Heart right ventricle (tissue), 16 donors: ENCODE measurements at regions of chr9 and their contacts with region 1.

Region 1: GRCh38 chr9:121059998-121060636 is 10.0 kb upstream of the C5 start:
- DNase-seq: peak in 1 of 2 donors; percentile 41
- ATAC-seq: no peak
- H3K4me3 ChIP-seq: no peak overlapping the region
- H3K27ac ChIP-seq: no peak overlapping the region
- H3K4me1 ChIP-seq: peaks cover 0 to 7% (median 0%) of the 10 kb centered on the region in 9 donors
- H3K27me3 ChIP-seq: no peaks in the 10 kb centered on the region
- CTCF ChIP-seq: peak; percentile 49 to 82 (median 77)

Region 2: DNA sequence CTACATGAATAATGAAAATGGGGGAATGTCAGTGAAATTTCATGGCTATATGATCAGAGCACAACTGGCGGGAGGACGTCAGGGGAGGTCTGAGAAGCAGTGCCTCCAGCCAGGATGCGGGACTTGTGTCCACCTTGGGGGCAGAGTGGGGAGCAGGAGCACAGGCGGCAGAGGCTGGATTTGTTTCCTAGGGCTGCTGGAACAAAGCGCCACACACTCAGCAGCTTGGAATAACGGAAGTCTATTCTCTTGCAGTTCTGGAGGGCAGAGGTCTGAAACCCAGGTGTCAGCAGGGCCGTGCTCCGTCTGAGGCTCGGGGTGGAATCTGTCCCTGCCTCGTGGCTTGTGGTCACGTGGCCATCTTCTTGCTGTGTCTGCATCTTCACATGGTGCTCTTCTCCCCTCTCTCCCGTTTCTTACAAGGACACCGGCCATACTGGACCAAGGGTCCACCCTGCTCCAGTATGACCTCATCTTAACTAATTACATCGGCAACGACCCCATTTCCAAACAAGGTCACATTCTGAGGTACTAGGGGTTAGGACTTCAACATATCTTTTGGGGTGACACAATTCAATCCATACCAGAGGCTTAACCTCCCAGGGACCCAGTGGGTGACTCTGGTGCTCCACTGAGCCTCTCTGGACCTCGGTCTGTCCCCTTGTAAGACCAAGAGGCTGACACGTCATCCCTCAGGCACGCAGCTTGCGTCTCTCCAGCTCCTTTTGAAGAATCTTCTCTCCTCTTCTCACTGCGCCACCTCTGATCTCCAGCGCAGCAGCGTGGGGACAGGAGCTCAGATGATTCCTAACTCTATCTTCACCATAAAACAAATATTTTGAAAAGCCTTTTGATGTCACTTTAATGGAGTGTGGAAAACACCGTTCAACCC is 682.6 kb before region 1 on chr9:
- intact Hi-C with region 1: no loop called
- DNase-seq: no peak
- ATAC-seq: no peak
- H3K4me3 ChIP-seq: no peak overlapping the region
- H3K27ac ChIP-seq: no peak overlapping the region
- H3K4me1 ChIP-seq: no peaks in the 10 kb centered on the region
- H3K27me3 ChIP-seq: no peaks in the 10 kb centered on the region
- CTCF ChIP-seq: no peak

Region 3: GRCh38 chr9:120750421-120750820 is 309.7 kb before region 1 on chr9:
- intact Hi-C with region 1: loop called in 8 of 10 experiments (anchors 5 to 10 kb)
- DNase-seq: no peak
- ATAC-seq: no peak
- H3K4me3 ChIP-seq: no peak overlapping the region
- H3K27ac ChIP-seq: no peak overlapping the region
- H3K4me1 ChIP-seq: peaks cover 0 to under 1% (median 0%) of the 10 kb centered on the region in 9 donors
- H3K27me3 ChIP-seq: no peaks in the 10 kb centered on the region
- CTCF ChIP-seq: no peak

Region 4: DNA sequence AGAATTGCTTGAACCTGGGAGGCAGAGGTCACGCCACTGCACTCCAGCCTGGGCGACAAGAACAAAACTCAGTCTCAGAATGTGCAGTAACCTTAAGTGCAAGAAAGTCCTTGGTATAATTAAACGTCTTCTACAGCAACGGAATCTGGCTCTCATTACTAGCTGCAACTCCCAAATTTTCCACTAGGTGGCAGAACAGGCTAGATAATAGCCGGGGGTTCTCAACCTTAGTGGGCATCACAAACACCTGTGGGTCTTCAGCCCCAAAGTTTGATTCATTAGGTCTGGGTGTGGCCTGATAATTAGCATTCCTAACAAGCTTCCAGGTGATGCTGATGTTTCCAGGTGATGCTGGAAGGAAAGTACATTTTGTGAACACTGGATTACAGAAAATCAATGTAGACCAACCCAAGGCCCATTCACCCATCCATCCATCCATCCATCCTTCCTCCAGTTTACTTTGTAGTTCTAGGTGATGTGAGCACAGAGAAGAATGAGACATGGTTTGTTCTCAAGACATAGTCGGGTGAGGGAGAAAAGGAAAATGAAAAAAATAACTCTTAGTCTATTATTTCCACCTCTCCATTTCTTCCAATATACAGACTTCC is 304.2 kb before region 1 on chr9:
- intact Hi-C with region 1: loop called (anchors 2 to 10 kb)
- DNase-seq: peak in 1 of 2 donors; percentile 54
- ATAC-seq: peak in 7 of 8 donors; percentile 50 to 78 (median 67)
- H3K4me3 ChIP-seq: no peak overlapping the region
- H3K27ac ChIP-seq: peak overlapping the region in 1 of 10 donors; percentile 15
- H3K4me1 ChIP-seq: peaks cover 0 to 24% (median 0%) of the 10 kb centered on the region in 9 donors
- H3K27me3 ChIP-seq: no peaks in the 10 kb centered on the region
- CTCF ChIP-seq: peak; percentile 79 to 93 (median 90)

Region 5: GRCh38 chr9:121545875-121546423 is 485.8 kb after region 1 on chr9:
- intact Hi-C with region 1: no loop called
- DNase-seq: peak; percentile 97
- ATAC-seq: peak; percentile 90 to 95 (median 94)
- H3K4me3 ChIP-seq: peak overlapping the region in 6 of 10 donors; percentile 17 to 39 (median 28)
- H3K27ac ChIP-seq: peak overlapping the region in 5 of 10 donors; percentile 26 to 54 (median 47)
- H3K4me1 ChIP-seq: peaks cover 5 to 27% (median 20%) of the 10 kb centered on the region in 9 donors
- H3K27me3 ChIP-seq: peaks cover 0 to 5% (median 0%) of the 10 kb centered on the region in 7 donors
- CTCF ChIP-seq: peak; percentile 95 to 99 (median 96)